Left ventricle myocardium inferior (tissue), 1 donor: ENCODE measurements at regions of chr1 and their contacts with region 1.

Region 1: GRCh38 chr1:174074757-174075156 is 52.6 kb upstream of the RC3H1 start:
- DNase-seq: no peak
- H3K4me3 ChIP-seq: peak overlapping the region; percentile 10
- H3K27ac ChIP-seq: no peak overlapping the region
- H3K4me1 ChIP-seq: no peaks in the 10 kb centered on the region
- H3K27me3 ChIP-seq: no peaks in the 10 kb centered on the region
- CTCF ChIP-seq: peak; percentile 56

Region 2: GRCh38 chr1:173986951-173987350 is 87.8 kb before region 1 on chr1:
- intact Hi-C with region 1: loop called (anchors 10 kb)
- DNase-seq: no peak
- H3K4me3 ChIP-seq: no peak overlapping the region
- H3K27ac ChIP-seq: no peak overlapping the region
- H3K4me1 ChIP-seq: no peaks in the 10 kb centered on the region
- H3K27me3 ChIP-seq: no peaks in the 10 kb centered on the region
- CTCF ChIP-seq: no peak

Region 3: DNA sequence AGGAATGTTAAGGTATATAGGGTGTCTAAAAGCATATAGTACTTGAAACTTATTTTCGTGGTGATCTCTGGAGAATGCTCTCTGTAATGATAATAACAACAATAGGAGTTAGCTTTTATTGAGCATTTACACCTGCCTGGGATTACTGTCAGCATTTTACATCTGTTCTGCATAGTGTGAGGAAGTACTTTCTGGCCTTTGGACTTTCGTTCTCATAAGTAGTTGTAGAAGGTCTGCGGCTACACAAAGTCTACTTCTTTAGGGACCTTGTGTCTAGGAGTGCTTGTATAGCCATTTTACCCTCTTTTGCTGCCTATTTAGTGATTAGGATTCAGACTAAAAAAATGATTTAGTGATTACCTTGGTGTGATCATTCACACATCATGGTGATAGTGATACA is 269.4 kb after region 1 on chr1:
- intact Hi-C with region 1: no loop called
- DNase-seq: no peak
- H3K4me3 ChIP-seq: no peak overlapping the region
- H3K27ac ChIP-seq: no peak overlapping the region
- H3K4me1 ChIP-seq: no peaks in the 10 kb centered on the region
- H3K27me3 ChIP-seq: no peaks in the 10 kb centered on the region
- CTCF ChIP-seq: no peak